PC-9 (cell line): ENCODE measurements at regions of chr10 and their contacts with region 1.

Region 1: DNA sequence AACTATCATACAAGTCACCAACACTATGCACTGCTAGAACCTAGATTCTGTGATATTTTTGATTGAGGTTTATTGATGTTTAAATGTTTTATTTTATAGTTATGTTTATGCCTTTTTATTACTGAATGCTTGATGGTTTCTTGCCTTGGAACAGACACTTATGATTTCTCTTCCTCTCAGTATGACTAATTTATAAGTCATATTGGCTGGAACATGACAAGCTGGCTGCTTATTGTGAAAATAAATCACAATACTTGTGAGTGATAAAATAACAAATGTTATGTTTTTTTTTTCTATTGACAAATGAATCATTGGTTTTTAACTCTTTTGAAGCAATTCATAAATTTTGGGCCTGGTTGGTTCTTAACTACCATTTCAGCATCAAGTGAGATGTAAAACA is 142.0 kb upstream of the MALRD1 start:
- DNase-seq: no peak
- H3K4me3 ChIP-seq: no peak overlapping the region
- H3K27ac ChIP-seq: no peak overlapping the region
- H3K4me1 ChIP-seq: no peaks in the 10 kb centered on the region
- H3K27me3 ChIP-seq: no peaks in the 10 kb centered on the region
- CTCF ChIP-seq: no peak

Region 2: GRCh38 chr10:18532881-18533535 is 373.6 kb before region 1 on chr10:
- CTCF ChIA-PET with region 1: no interaction called
- POLR2A ChIA-PET with region 1: no interaction called
- intact Hi-C with region 1: no loop called
- DNase-seq: no peak
- H3K4me3 ChIP-seq: no peak overlapping the region
- H3K27ac ChIP-seq: no peak overlapping the region
- H3K4me1 ChIP-seq: no peaks in the 10 kb centered on the region
- H3K27me3 ChIP-seq: no peaks in the 10 kb centered on the region
- CTCF ChIP-seq: no peak

Region 3: GRCh38 chr10:18860631-18861240 is 45.9 kb before region 1 on chr10:
- CTCF ChIA-PET with region 1: interaction called, 10 read pairs
- POLR2A ChIA-PET with region 1: no interaction called
- intact Hi-C with region 1: no loop called
- DNase-seq: no peak
- H3K4me3 ChIP-seq: no peak overlapping the region
- H3K27ac ChIP-seq: no peak overlapping the region
- H3K4me1 ChIP-seq: no peaks in the 10 kb centered on the region
- H3K27me3 ChIP-seq: no peaks in the 10 kb centered on the region
- CTCF ChIP-seq: no peak

Region 4: GRCh38 chr10:18984531-18984930 is 77.9 kb after region 1 on chr10:
- CTCF ChIA-PET with region 1: no interaction called
- POLR2A ChIA-PET with region 1: no interaction called
- intact Hi-C with region 1: no loop called
- DNase-seq: no peak
- H3K4me3 ChIP-seq: no peak overlapping the region
- H3K27ac ChIP-seq: no peak overlapping the region
- H3K4me1 ChIP-seq: no peaks in the 10 kb centered on the region
- H3K27me3 ChIP-seq: no peaks in the 10 kb centered on the region
- CTCF ChIP-seq: no peak